Vagina (tissue), 2 donors: ENCODE measurements at regions of chr22 and their contacts with region 1.

Region 1: DNA sequence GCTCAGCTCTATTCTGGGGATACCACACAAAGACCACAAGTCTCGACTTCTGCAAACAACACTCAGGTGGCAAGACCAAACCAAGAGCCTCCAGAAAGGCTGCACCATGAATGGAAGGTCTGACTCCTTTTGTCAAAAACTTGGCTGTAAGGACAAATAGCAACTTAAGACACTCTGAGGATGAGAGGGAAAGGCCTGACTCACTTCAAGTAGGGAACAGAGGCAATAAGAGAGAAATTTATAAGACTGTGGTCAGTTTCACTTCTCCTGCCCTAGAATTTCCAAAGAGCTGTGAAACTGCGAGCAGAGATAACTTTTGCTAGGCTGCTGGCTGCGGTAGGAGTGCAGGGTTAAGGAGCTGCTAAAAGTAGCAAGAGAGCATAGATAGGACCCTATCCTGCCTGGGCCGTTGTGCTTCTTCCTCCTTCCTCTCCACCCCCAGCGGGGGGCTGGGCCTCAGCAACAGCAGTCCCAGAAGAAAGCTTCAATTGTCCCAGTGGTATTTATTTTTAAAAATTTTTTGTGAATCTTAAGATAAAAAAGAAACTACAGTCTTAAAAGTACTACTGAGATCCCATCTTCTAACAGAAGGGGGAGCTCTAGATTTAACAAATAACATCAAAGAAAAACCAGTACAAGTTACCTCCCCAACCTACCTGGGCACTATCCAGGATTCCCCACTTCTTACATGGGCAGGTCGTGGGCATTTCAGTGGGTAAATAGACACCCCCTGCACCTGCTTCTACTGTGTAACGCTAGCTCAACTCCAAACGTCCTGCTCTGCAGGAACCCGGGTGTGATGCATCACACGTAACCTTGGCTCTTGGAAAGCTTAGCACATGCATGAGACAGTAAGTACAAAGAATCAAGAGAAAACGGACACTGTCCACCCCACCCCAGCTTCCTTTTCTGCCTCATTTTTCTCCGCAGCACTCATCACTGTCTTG is 66.4 kb downstream of the SGSM3 start:
- DNase-seq: no peak
- H3K4me3 ChIP-seq: peak overlapping the region; percentile 5 to 25
- H3K27ac ChIP-seq: peak overlapping the region; percentile 69
- H3K4me1 ChIP-seq: peaks cover 26% of the 10 kb centered on the region
- H3K27me3 ChIP-seq: no peaks in the 10 kb centered on the region
- CTCF ChIP-seq: peak; percentile 47 to 80 (median 55)
- POLR2A ChIP-seq: no peak

Region 2: GRCh38 chr22:40009292-40009769 is 427.4 kb before region 1 on chr22:
- intact Hi-C with region 1: no loop called
- DNase-seq: no peak
- H3K4me3 ChIP-seq: no peak overlapping the region
- H3K27ac ChIP-seq: no peak overlapping the region
- H3K4me1 ChIP-seq: peaks cover 25% of the 10 kb centered on the region
- H3K27me3 ChIP-seq: no peaks in the 10 kb centered on the region
- CTCF ChIP-seq: no peak
- POLR2A ChIP-seq: no peak

Region 3: GRCh38 chr22:40300884-40301672 is 135.7 kb before region 1 on chr22:
- intact Hi-C with region 1: no loop called
- DNase-seq: no peak
- H3K4me3 ChIP-seq: no peak overlapping the region
- H3K27ac ChIP-seq: no peak overlapping the region
- H3K4me1 ChIP-seq: peaks cover 4% of the 10 kb centered on the region
- H3K27me3 ChIP-seq: no peaks in the 10 kb centered on the region
- CTCF ChIP-seq: no peak
- POLR2A ChIP-seq: no peak

Region 4: DNA sequence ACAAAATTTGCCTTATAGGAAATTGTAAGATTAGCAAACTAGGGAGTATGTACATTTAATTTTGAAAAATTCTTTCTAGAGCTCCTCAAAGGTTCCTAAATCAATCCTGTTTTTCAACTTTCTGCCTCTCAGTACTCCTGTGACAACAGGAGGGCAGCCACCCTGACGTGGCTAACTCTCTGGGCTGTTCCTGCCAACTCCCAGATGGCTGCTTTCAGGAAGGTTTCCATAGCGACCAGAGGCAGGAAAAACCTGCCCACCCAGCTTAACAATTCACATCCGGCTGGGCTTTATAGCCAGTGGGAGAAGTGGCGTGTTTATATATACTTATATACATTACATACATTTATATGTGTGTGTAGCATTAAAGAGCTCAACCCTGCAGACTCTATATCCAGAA is 39.9 kb before region 1 on chr22:
- intact Hi-C with region 1: no loop called
- DNase-seq: peak in 1 of 2 donors; percentile 86
- H3K4me3 ChIP-seq: no peak overlapping the region
- H3K27ac ChIP-seq: peak overlapping the region; percentile 37
- H3K4me1 ChIP-seq: peaks cover 13% of the 10 kb centered on the region
- H3K27me3 ChIP-seq: no peaks in the 10 kb centered on the region
- CTCF ChIP-seq: no peak
- POLR2A ChIP-seq: no peak

Region 5: DNA sequence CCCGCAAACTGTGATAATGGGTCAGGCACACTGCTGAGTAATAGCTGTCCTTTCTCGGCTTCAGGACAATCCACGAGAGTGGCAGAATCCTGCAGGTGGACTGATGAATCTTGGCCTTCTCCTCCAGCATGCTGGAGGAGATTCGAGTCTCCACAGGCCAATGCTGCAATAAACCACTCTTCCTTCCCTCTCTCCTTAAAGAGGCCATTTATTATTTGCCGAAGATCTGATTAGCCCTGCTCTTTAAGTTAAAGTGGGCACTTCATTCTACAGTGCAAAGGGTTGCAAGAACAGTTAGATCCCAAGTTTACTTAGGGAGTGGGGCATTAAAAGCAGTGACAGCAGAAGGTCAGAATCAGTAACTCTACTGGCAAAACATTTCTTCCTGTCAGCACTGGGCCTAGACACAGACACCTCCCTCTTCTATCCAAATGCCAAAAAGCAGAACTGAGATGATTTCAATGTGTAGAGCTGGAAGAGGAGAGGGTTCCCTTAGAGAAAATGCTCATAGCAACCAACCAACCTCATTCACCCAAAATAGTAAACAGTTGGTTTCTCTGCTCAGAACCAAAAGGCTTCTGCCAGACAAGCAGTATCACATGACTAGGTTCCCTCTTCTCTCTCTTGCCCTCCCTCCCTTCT is 55.3 kb after region 1 on chr22:
- intact Hi-C with region 1: loop called (anchors 10 kb)
- DNase-seq: no peak
- H3K4me3 ChIP-seq: no peak overlapping the region
- H3K27ac ChIP-seq: peak overlapping the region; percentile 39
- H3K4me1 ChIP-seq: peaks cover 41% of the 10 kb centered on the region
- H3K27me3 ChIP-seq: no peaks in the 10 kb centered on the region
- CTCF ChIP-seq: no peak
- POLR2A ChIP-seq: no peak

Region 6: DNA sequence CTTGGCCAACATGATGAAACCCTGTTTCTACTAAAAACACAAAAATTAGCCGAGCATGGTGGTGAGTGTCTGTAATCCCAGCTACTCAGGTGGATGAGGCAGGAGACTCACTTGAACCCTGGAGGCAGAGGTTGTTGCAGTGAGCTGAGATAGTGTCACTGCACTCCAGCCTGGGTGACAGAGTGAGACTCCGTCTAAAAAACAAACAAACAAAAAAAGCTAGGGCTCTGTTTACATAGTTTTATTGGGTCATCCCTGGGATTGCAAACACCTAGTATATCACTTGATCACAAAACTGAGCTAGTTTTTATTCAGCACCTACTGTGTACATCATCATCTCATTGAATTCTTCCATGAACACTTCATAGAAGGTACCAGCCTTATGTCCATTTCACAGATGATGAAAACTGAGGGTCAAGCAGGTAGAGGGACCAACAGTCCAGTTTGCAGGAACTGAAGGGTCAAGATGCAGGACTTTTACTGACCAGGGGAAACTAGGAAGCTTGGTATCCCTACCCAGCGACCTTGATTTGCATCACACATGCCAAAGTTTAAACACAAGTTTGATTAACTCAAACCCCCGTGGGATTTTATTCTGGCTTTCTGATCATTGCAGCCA is 208.9 kb after region 1 on chr22:
- intact Hi-C with region 1: loop called (anchors 2 kb)
- DNase-seq: no peak
- H3K4me3 ChIP-seq: no peak overlapping the region
- H3K27ac ChIP-seq: no peak overlapping the region
- H3K4me1 ChIP-seq: no peaks in the 10 kb centered on the region
- H3K27me3 ChIP-seq: no peaks in the 10 kb centered on the region
- CTCF ChIP-seq: no peak
- POLR2A ChIP-seq: no peak